IMR-90 (cell line): ENCODE measurements at regions of chr19 and their contacts with region 1.

Region 1: GRCh38 chr19:1837625-1838105 is 10.6 kb downstream of the REXO1 start:
- DNase-seq: no peak
- ATAC-seq: peak; percentile 95
- H3K4me3 ChIP-seq: no peak overlapping the region
- H3K27ac ChIP-seq: no peak overlapping the region
- H3K4me1 ChIP-seq: no peaks in the 10 kb centered on the region
- H3K27me3 ChIP-seq: no peaks in the 10 kb centered on the region
- CTCF ChIP-seq: peak; percentile 78
- POLR2A ChIP-seq: no peak
- RAD21 ChIP-seq: peak; percentile 54

Region 2: GRCh38 chr19:1668486-1669270 is 169.0 kb before region 1 on chr19:
- CTCF ChIA-PET with region 1: no interaction called
- POLR2A ChIA-PET with region 1: no interaction called
- dilution Hi-C with region 1: no loop called
- in situ Hi-C with region 1: no loop called
- intact Hi-C with region 1: no loop called
- DNase-seq: no peak
- ATAC-seq: peak; percentile 30
- H3K4me3 ChIP-seq: no peak overlapping the region
- H3K27ac ChIP-seq: no peak overlapping the region
- H3K4me1 ChIP-seq: peaks cover 5% of the 10 kb centered on the region
- H3K27me3 ChIP-seq: peaks cover 42% of the 10 kb centered on the region
- CTCF ChIP-seq: no peak
- POLR2A ChIP-seq: no peak
- RAD21 ChIP-seq: no peak

Region 3: DNA sequence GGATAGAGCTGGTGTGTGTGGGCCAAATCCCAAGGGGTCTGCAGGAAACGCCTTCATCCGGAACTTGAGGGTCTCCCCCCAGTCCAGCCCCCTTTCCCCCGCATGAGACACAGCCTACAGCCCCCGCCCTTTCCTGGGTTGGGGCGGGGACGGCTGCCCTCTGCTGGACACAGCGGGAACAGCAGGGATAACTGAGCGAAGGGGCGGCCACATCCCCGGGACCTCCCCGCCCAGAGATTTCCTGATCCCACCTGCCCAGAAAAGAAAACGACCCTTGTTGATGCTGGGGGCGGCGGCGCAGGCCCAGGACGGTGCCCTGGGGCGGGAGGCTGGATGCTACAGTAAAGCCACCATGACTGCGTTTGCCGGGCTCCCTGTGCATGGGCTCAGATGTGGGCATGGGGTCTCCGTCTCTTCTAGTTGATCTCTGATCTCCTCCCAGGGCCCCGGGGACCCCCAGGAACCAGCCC is 70.2 kb before region 1 on chr19:
- CTCF ChIA-PET with region 1: no interaction called
- POLR2A ChIA-PET with region 1: no interaction called
- dilution Hi-C with region 1: no loop called
- in situ Hi-C with region 1: no loop called
- intact Hi-C with region 1: no loop called
- DNase-seq: no peak
- ATAC-seq: peak; percentile 92
- H3K4me3 ChIP-seq: no peak overlapping the region
- H3K27ac ChIP-seq: no peak overlapping the region
- H3K4me1 ChIP-seq: no peaks in the 10 kb centered on the region
- H3K27me3 ChIP-seq: peaks cover 64% of the 10 kb centered on the region
- CTCF ChIP-seq: peak; percentile 84
- POLR2A ChIP-seq: no peak
- RAD21 ChIP-seq: peak; percentile 77

Region 4: GRCh38 chr19:1884719-1885334 is 47.2 kb after region 1 on chr19:
- CTCF ChIA-PET with region 1: interaction called, 10 read pairs
- POLR2A ChIA-PET with region 1: no interaction called
- dilution Hi-C with region 1: no loop called
- in situ Hi-C with region 1: no loop called
- intact Hi-C with region 1: no loop called
- DNase-seq: no peak
- ATAC-seq: peak; percentile 49
- H3K4me3 ChIP-seq: peak overlapping the region; percentile 99
- H3K27ac ChIP-seq: peak overlapping the region; percentile 89
- H3K4me1 ChIP-seq: peaks cover 24% of the 10 kb centered on the region
- H3K27me3 ChIP-seq: no peaks in the 10 kb centered on the region
- CTCF ChIP-seq: no peak
- POLR2A ChIP-seq: peak; percentile 43; the same call in 1 of the 2 replicates
- RAD21 ChIP-seq: no peak